ENCODE measurements at regions of chr4 and their contacts with region 1.

Region 1: GRCh38 chr4:10164877-10165283 is 48.3 kb upstream of the WDR1 start:
- DNase-seq: no peak
- H3K4me3 ChIP-seq: no peak overlapping the region
- H3K27me3 ChIP-seq: no peaks in the 10 kb centered on the region
- CTCF ChIP-seq: peak; percentile 74

Region 2: GRCh38 chr4:10151182-10151581 is 13.7 kb before region 1 on chr4:
- CTCF ChIA-PET with region 1: interaction called, 38 read pairs
- POLR2A ChIA-PET with region 1: no interaction called
- DNase-seq: no peak
- H3K4me3 ChIP-seq: no peak overlapping the region
- H3K27me3 ChIP-seq: peaks cover 8% of the 10 kb centered on the region
- CTCF ChIP-seq: no peak

Region 3: DNA sequence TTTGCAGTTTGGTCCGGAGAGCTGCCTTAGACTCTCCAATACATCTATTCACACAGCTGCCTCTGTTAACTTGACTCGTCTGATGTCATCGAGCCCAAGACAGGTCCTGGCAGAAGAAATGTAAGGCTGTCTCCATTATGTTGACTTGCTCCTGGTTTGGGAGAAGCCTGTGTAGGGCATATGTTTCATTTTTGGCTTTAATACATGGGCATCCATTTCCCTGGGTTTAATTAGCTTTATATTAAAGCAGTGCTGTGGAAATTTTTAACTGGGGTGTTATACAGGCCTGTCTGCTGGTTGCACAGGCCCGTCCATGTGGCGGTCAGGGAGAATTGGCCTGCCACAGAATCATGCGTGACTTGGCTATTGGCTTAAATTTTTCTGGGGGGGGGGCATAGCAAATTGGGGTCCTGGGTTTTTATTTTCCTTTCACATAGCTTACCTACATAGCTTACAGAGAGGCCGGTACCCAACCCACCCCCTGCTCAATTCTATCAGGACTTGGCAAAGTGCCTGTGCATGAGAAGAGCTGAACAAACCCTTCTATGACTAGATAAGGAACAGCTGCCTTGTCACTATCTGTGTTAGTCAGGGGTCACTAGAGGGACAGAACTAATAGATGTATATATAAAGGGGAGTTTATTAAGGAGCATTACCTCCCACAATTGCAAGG is 75.2 kb after region 1 on chr4:
- CTCF ChIA-PET with region 1: no interaction called
- POLR2A ChIA-PET with region 1: no interaction called
- DNase-seq: no peak
- H3K4me3 ChIP-seq: no peak overlapping the region
- H3K27me3 ChIP-seq: peaks cover 2% of the 10 kb centered on the region; the same call in 1 of the 2 replicates
- CTCF ChIP-seq: no peak

Region 4: GRCh38 chr4:10535912-10536311 is 371.0 kb after region 1 on chr4:
- CTCF ChIA-PET with region 1: interaction called, 73 read pairs
- POLR2A ChIA-PET with region 1: no interaction called
- DNase-seq: no peak
- H3K4me3 ChIP-seq: no peak overlapping the region
- H3K27me3 ChIP-seq: peaks cover 3% of the 10 kb centered on the region; the same call in 1 of the 2 replicates
- CTCF ChIP-seq: no peak

Region 5: GRCh38 chr4:10743357-10743756 is 578.5 kb after region 1 on chr4:
- CTCF ChIA-PET with region 1: no interaction called
- POLR2A ChIA-PET with region 1: no interaction called
- DNase-seq: no peak
- H3K4me3 ChIP-seq: no peak overlapping the region
- H3K27me3 ChIP-seq: no peaks in the 10 kb centered on the region
- CTCF ChIP-seq: no peak

Measured in BJ (cell line).